BJ (cell line): ENCODE measurements at regions of chr12 and their contacts with region 1.

Region 1: DNA sequence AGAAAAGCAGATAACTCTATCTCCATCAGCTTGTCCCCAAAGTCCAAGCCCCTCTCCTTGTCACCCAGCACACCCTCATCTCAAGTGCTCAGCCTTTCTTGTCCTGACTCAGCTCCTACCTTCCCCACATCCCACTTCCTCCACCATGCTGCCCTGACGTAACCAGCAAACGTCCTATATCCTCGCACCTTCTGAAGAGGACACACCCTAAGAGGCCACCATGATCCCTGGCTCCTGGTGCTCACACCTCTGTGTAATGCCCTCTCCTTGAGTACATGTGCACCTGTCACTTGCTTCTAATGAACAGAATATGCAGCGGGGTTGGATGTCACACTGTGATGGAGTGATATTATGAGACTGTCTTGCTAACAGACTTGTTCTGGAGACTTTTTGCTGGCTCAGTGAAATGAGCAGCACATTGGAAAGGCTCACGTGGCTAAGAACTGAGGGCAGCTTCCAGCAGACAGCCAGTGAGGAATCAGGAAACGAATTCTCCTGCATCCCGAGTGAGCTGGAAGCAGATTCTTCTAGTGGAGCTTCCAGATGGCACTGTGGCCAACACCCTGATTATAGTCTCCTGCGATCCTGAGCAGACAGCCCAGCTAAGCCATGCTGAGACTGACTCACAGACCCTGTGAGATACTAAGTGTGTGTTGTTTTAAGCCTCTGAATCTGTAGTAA is 16.3 kb upstream of the TSPAN9 start:
- DNase-seq: peak; percentile 55
- H3K4me3 ChIP-seq: no peak overlapping the region
- H3K27me3 ChIP-seq: peaks cover 7% of the 10 kb centered on the region
- CTCF ChIP-seq: no peak

Region 2: GRCh38 chr12:2290091-2290490 is 770.8 kb before region 1 on chr12:
- CTCF ChIA-PET with region 1: no interaction called
- POLR2A ChIA-PET with region 1: interaction called, 11 read pairs
- DNase-seq: no peak
- H3K4me3 ChIP-seq: no peak overlapping the region
- H3K27me3 ChIP-seq: no peaks in the 10 kb centered on the region
- CTCF ChIP-seq: no peak